Tibial artery (tissue), 4 donors: ENCODE measurements at regions of chr1 and their contacts with region 1.

Region 1: DNA sequence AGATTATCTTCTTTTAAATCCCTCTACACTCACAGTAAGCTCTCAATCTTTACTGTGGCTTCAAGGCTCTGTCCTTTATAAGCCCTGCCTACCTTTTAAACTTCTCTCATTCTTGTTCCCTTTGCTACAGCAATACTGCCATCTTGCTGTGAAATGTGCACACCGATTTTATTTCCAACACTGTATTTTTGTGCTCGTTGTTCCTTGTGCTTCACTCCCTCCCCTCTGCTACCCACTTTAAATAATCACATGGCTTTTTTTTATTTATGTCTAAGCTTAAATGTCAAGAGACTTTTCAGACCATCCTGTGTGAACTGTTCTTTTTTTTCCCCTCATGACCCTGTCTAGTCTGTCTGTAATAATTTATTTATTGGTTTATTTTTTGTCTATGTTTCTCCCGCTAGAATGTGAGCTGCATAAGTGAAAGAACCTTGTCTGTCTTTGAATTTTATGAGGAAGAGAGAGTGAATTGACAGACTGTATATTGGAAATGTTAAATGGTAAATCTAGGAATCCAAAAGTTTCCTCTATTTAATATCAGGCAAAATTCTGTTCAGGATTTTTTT is 45.7 kb downstream of the ABCD3 start:
- DNase-seq: no peak
- H3K4me3 ChIP-seq: no peak overlapping the region
- H3K27ac ChIP-seq: no peak overlapping the region
- H3K4me1 ChIP-seq: no peaks in the 10 kb centered on the region
- H3K27me3 ChIP-seq: no peaks in the 10 kb centered on the region
- CTCF ChIP-seq: peak in 1 of 2 experiments; percentile 46

Region 2: DNA sequence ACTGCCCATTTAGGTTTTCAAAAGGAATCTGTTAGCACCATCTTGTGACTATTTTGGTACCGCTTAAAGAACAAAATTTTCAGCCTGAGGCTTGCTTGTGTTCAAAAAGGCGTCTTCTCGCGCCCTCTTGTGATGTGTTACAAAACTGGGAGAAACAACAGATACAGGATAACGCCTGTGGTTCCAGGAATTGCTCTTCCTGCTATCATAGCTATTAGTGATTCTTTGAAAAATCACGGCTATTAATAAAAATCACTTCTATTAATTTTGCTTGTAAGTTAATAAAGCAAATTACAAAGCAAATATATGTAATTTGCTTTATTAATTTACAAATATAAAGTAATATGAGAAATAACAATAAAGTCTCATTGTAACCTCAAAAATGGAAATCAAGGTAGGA is 127.9 kb before region 1 on chr1:
- intact Hi-C with region 1: no loop called
- DNase-seq: peak; percentile 77 to 83
- H3K4me3 ChIP-seq: no peak overlapping the region
- H3K27ac ChIP-seq: no peak overlapping the region
- H3K4me1 ChIP-seq: peaks cover 0 to 19% (median 9%) of the 10 kb centered on the region in 4 donors
- H3K27me3 ChIP-seq: no peaks in the 10 kb centered on the region
- CTCF ChIP-seq: peak; percentile 82 to 94

Region 3: GRCh38 chr1:94401206-94401605 is 62.6 kb before region 1 on chr1:
- intact Hi-C with region 1: loop called (anchors 2 kb)
- DNase-seq: no peak
- H3K4me3 ChIP-seq: no peak overlapping the region
- H3K27ac ChIP-seq: no peak overlapping the region
- H3K4me1 ChIP-seq: peaks cover 0 to 7% (median 2%) of the 10 kb centered on the region in 4 donors
- H3K27me3 ChIP-seq: no peaks in the 10 kb centered on the region
- CTCF ChIP-seq: no peak

Region 4: GRCh38 chr1:94501935-94502334 is 38.1 kb after region 1 on chr1:
- intact Hi-C with region 1: loop called (anchors 2 kb)
- DNase-seq: no peak
- H3K4me3 ChIP-seq: no peak overlapping the region
- H3K27ac ChIP-seq: no peak overlapping the region
- H3K4me1 ChIP-seq: no peaks in the 10 kb centered on the region
- H3K27me3 ChIP-seq: no peaks in the 10 kb centered on the region
- CTCF ChIP-seq: no peak